Motor neuron (in vitro differentiated cells): ENCODE measurements at regions of chr6 and their contacts with region 1.

Region 1: DNA sequence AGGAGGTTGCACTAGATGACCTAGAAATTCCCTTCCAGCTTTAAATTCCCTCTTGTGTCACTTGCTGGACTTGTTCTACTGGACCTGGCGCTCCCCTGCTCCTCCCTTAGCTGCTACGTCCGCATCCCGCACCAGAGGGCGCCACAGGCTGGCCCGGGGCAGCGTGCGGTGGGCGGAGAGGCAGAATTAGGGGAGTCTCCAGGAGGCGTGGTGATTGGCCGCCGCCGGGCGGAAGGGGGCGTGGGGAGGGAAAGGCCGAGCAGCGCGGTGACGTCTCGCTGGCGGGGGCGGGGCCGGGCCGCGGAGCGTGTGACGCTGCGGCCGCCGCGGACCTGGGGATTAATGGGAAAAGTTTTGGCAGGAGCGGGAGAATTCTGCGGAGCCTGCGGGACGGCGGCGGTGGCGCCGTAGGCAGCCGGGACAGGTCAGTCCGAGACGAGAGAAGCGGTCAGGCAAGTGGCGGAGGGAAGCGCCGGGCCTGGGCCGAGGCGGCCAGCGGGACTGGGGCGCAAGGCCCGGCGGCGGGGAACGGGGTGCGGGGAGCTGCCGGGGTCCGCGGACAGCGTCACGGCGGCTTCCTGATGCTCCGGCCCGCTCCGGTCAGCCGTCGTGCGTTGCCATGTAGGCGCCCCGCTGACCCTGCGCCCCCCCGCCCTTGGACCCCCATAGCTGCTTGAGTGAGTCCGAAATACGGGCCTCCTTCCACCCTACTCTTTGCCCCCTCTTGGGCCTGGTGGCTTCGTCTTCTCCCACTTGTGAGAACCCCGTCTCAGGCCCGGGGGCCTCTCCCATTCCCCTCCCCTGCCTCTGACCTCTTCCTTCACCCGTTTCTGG is at the start of gene PPARD:
- ATAC-seq: peak; percentile 94 to 99 (median 98)
- H3K4me3 ChIP-seq: peak within 1 kb of the TSS; percentile 45 to 97 (median 69)
- H3K27ac ChIP-seq: no peak within 1 kb of the TSS
- H3K4me1 ChIP-seq: peaks cover 6 to 9% of the 10 kb centered on the region in 2 donors
- total RNA-seq, gene PPARD: 2.9 to 17.1 (median 8.1) TPM

Region 2: GRCh38 chr6:35449287-35449881 is 106.9 kb after region 1 on chr6:
- in situ Hi-C with region 1: loop called in 3 of 9 experiments (anchors 10 to 25 kb)
- ATAC-seq: peak in 4 of 8 experiments; percentile 23 to 59 (median 31)
- H3K4me3 ChIP-seq: no peak overlapping the region
- H3K27ac ChIP-seq: no peak overlapping the region
- H3K4me1 ChIP-seq: peaks cover 13% of the 10 kb centered on the region in 2 donors